Breast epithelium (tissue), 4 donors: ENCODE measurements at regions of chr5 and their contacts with region 1.

Region 1: DNA sequence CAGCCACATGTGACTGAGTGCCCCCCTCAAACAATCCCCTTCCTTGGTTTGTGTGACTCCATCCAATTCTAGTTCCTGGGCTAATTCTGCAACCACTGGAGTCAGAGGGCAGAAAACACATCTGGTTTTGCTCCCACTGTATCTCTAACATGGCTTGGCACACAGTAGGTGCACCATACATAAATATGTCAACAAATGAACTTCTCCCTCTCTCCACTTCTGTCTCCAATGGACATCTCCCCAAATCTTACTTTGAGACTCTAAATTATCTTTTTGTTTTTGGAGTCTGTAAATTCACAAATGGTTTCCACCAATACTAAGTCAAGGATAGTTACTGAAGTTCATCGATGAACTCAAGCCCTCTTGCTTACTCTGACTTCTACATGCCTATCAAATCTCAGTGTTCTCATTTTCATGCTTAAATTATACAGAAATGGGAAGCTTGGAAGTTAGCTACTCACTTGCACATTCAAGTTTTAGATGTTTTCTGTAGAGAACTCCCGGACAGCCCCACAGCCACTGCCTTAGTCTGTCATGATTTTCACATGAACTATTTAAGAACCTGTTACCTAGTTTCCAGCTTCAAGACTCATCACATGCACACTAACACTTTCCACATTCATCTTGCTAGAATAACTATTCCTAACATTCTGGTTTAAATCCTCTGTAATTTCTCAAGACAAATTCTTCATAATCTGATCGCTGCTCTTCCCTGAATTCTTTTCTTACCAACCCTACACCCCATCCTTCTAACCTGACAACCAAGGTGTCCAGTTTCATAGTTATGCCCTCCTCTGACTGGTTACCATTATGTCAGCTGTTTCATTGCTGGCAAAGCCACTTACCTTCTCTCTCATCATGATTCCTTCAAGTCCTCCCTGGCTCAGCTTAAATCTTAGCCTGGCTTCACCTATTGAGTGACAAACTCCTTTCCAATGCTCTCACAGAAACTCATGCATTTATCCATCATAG is 6.0 kb downstream of the RPL37 start:
- DNase-seq: no peak
- H3K4me3 ChIP-seq: no peak overlapping the region
- H3K27ac ChIP-seq: no peak overlapping the region
- H3K4me1 ChIP-seq: peaks cover 0 to 6% of the 10 kb centered on the region in 2 donors
- H3K27me3 ChIP-seq: no peaks in the 10 kb centered on the region
- CTCF ChIP-seq: no peak
- POLR2A ChIP-seq: no peak

Region 2: GRCh38 chr5:40866291-40866690 is 37.3 kb after region 1 on chr5:
- intact Hi-C with region 1: loop called (anchors 2 kb)
- DNase-seq: no peak
- H3K4me3 ChIP-seq: no peak overlapping the region
- H3K27ac ChIP-seq: no peak overlapping the region
- H3K4me1 ChIP-seq: no peaks in the 10 kb centered on the region
- H3K27me3 ChIP-seq: no peaks in the 10 kb centered on the region
- CTCF ChIP-seq: no peak
- POLR2A ChIP-seq: no peak